ENCODE measurements at regions of chr7 and their contacts with region 1.

Region 1: GRCh38 chr7:35519971-35520809 is 174.7 kb downstream of the HERPUD2 start:
- DNase-seq: peak; percentile 92
- ATAC-seq: peak; percentile 91

Region 2: DNA sequence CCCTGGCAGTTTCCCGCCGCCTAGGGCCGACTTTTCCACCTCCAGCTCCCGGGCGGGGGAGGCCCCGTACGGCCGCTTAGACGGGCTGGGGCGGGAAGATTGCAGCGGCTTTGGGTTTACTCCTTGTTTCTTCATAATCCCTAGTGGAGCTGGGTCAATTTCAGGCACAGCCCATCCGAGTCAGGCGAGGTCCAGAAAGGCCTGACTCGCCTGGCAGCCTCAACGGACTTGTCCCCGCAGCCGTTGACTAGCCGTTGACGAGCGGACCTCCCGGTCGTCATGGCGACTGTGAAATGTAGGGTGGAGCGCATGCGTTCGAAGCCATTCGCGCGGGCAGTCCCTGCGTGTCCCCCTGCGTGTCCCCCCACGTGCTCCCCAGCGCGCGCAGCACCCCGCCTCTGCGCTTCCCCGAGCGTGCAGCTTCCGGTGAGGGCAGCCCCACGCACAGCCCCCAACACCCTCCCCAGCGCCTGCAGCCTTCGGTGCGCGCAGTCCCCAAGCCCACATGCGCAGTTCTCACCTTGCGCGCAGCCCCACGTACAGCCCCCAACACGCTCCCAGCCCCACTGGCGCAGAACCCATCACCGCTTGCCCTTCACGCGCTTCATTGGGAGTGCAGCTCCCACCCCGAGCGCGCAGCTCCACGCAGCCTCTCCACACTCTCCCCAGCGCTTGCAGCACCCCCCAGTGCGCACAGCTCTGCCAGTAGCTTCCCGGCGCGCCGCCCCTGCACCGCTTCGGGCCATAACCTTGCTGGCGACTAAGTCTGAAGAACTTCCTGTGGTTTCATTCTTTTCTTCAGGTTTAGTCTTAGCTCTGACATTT is 334.1 kb before region 1 on chr7:
- intact Hi-C with region 1: loop called (anchors 5 kb)
- DNase-seq: peak; percentile 79
- ATAC-seq: peak; percentile 91

Region 3: GRCh38 chr7:35253710-35254495 is 266.3 kb before region 1 on chr7 and contains the start of gene TBX20:
- intact Hi-C with region 1: loop called (anchors 2 kb)
- DNase-seq: peak; percentile 90
- ATAC-seq: peak; percentile 80
- total RNA-seq, gene TBX20: 138 TPM

Region 4: GRCh38 chr7:35424869-35425495 is 95.2 kb before region 1 on chr7:
- intact Hi-C with region 1: loop called (anchors 1 kb)
- DNase-seq: peak; percentile 72
- ATAC-seq: peak; percentile 75

Region 5: GRCh38 chr7:35465791-35466336 is 54.3 kb before region 1 on chr7:
- intact Hi-C with region 1: loop called (anchors 2 kb)
- DNase-seq: peak; percentile 88
- ATAC-seq: peak; percentile 93

Region 6: DNA sequence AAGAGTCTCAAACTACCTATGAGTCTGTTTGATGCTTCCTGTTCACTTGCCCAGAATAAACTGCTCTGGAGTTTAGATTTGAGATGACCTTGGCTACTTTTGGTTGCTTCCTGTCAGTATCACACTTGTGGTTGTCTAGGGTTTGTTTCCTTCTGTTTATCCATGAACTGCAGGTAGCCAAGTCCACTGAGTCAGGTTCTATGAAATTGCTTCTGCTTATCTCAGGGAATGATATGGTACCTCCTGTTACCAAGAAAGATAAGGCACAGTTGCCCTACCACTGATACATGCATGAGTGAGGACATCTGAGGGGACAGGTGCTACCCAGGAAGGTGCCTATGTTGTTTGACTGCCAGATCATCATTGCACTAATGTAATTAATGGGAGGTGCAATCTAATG is 617.1 kb after region 1 on chr7:
- intact Hi-C with region 1: no loop called
- DNase-seq: no peak
- ATAC-seq: peak; percentile 28

Measured in Right ventricle myocardium inferior (tissue), 1 donor.